RWPE1 (cell line): ENCODE measurements at regions of chr2 and their contacts with region 1.

Region 1: GRCh38 chr2:219029829-219030165 is 11.5 kb downstream of the CFAP65 start:
- DNase-seq: peak; percentile 84
- H3K27ac ChIP-seq: no peak overlapping the region
- CTCF ChIP-seq: peak; percentile 93

Region 2: DNA sequence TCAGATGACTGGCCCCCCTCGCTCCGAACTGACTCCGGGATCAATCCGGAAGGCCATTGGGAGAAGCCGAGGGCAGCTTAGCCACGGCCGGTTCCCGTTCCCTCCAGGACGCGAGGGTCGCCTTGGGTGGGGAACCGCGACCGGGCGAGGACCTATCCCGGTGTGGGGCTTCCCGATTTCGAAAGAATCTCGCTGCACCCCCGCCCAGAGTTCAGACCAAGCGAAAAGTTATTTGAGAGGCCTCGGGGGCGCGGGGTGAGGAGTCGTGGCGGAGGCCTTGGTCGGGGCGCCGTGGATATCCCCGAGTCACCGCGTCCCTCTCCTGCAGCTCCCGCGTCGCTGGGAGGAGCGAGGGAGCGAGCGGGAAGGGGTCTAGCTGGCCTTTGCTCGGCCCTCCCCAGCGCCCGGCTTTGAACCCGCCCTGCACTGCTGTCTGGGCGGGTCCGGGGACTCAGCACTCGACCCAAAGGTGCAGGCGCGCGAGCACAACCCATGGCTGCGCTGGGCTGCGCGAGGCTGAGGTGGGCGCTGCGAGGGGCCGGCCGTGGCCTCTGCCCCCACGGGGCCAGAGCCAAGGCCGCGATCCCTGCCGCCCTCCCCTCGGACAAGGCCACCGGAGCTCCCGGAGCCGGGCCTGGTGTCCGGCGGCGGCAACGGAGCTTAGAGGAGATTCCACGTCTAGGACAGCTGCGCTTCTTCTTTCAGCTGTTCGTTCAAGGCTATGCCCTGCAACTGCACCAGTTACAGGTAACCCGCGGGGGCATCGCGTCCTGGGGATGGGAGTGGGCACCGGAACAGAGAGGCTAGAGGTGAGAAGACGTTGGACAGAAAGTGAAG is 247.9 kb before region 1 on chr2 and contains the start of gene CYP27A1:
- CTCF ChIA-PET with region 1: no interaction called
- POLR2A ChIA-PET with region 1: no interaction called
- DNase-seq: no peak
- H3K27ac ChIP-seq: no peak within 1 kb of the TSS
- CTCF ChIP-seq: no peak

Region 3: GRCh38 chr2:219041252-219041651 is 11.5 kb after region 1 on chr2 and contains the start of gene CFAP65:
- CTCF ChIA-PET with region 1: interaction called, 12 read pairs
- POLR2A ChIA-PET with region 1: no interaction called
- DNase-seq: peak; percentile 57
- H3K27ac ChIP-seq: no peak within 1 kb of the TSS
- CTCF ChIP-seq: no peak

Region 4: DNA sequence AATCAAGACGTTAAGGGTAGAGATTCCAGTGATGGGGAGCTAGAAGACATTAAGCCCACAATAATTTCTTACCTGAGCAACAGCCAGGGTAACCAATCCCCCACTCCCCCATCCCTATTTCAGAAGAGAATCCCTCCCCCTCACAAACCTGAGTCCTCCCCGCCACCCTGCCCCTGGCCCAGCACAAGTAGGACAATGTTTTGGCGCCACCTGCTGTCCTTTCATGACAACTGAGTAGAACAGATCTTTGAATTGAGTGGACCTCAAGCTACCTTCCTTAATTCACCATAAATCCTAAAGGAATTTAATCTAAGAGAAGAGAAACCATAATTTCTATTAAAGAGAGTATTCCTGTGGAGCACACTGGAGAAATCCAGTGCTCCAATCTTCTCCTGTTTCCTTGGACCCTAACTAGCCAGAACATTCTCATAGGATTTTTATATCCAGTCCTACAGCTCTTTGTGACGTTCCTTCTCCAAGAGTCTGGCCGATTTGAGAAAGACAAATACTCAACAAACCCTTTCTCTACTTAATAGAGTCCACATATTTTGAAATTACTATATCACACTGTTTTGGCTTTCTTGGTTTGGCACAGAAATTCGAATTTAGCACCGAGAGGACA is 89.7 kb after region 1 on chr2:
- CTCF ChIA-PET with region 1: interaction called, 34 read pairs
- POLR2A ChIA-PET with region 1: no interaction called
- DNase-seq: peak; percentile 54
- H3K27ac ChIP-seq: no peak overlapping the region
- CTCF ChIP-seq: peak; percentile 77

Region 5: GRCh38 chr2:219124381-219125110 is 94.7 kb after region 1 on chr2:
- CTCF ChIA-PET with region 1: interaction called, 34 read pairs
- POLR2A ChIA-PET with region 1: no interaction called
- DNase-seq: no peak
- H3K27ac ChIP-seq: no peak overlapping the region
- CTCF ChIP-seq: no peak

Region 6: DNA sequence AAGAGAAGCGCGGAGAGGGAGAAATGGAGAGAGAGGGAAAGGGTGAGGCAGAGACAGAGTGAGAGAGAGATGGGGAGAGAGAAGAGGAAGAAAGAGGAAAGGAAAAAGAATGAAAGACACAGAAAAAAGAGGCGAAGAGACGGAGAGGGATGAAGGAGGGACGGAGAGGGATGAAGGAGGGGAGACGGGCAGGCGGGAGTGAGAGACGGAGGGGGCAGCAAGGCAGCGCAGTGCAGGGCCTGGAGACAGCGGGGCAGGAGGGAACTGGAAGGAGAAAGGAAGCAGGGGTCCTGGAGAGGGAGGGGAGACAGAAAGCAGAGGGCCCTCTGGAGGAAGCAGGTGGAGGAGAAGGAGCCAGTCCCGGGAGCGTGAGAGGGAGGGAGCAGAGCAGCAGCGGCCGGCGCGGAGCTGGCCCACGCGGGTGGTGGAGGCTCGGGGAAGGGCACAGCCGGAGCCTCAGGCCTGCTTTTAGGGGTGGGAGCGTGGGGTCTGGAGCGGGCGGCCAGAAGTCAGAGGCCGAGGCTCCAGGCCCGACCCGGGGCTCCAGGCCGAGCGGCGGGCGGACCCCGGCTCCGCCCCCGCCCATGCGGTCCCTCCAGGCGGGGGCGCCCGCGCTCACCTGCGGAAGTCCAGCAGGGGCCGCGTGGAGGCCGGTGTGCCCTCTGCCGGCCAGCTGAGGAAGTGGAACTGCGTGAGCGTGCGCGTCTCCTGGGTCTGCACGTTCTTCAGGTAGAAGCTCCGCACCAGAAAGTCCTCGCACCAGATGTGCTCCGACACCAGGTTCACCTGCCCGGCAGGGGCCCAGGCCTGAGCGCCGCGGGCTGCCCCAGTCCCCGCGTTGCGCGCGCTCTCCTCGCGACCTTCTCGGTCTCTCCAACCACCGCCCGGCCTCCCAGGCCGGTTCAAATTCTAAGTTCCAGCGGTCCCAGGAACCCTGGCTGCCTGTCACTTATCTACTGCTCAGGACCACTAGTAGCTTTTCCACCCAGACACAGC is 264.9 kb after region 1 on chr2:
- CTCF ChIA-PET with region 1: no interaction called
- POLR2A ChIA-PET with region 1: no interaction called
- DNase-seq: peak; percentile 84
- H3K27ac ChIP-seq: peak overlapping the region; percentile 67
- CTCF ChIP-seq: peak; percentile 97